ENCODE measurements at regions of chr1 and their contacts with region 1.

Region 1: DNA sequence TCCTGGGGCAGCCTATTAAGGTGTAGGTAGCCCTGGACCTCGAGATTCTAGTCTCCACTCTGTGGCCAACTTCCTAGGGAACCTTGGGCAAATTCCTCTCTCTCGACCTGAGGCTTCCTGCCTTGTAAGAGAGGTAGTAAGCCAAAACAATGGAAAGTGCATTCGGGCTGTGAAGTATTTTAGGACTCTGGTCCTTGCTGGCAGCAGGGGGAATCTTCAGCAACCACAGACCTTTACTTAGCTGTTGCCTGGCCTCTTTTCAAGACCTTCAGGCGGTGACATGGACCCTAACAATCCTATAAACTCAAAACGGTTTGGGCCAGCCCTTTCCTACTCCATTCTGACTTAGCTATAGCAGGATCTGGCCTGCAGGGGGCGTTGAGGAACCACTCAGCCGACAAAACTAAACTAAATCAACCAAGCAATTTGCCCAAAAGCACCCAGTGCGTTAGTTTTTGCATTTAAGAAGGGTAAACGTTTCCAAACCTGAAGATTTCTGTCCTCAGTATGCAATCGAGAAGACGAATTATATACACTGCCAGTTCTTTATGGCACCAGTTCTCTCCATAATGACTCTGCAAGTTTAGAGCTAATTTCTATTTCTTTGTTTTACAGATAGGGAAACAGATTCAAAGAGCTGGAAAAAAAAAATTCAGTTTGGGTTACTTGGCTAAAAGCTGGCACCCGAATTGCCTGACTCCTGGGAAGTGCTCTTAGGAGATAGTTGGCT is 10.9 kb upstream of the SESN2 start:
- H3K4me3 ChIP-seq: peak overlapping the region; percentile 13
- H3K27ac ChIP-seq: peak overlapping the region; percentile 44
- H3K4me1 ChIP-seq: peaks cover 12% of the 10 kb centered on the region; the same call in 1 of the 2 replicates
- CTCF ChIP-seq: peak; percentile 63

Region 2: GRCh38 chr1:28235755-28236655 is 12.4 kb before region 1 on chr1 and contains the start of gene ATP5IF1:
- CTCF ChIA-PET with region 1: interaction called, 16 read pairs
- POLR2A ChIA-PET with region 1: interaction called, 23 read pairs
- H3K4me3 ChIP-seq: peak within 1 kb of the TSS; percentile 77
- H3K27ac ChIP-seq: peak within 1 kb of the TSS; percentile 48; the same call in 1 of the 2 replicates
- H3K4me1 ChIP-seq: 0 out of 2 replicates have a peak, but pooled peaks cover 3% of the 10 kb centered on the region
- CTCF ChIP-seq: 0 out of 2 replicates have a peak, but pooled peaks have one; percentile 10

Region 3: GRCh38 chr1:28266920-28267322 is 18.5 kb after region 1 on chr1:
- CTCF ChIA-PET with region 1: interaction called, 14 read pairs
- POLR2A ChIA-PET with region 1: interaction called, 13 read pairs
- H3K4me3 ChIP-seq: no peak overlapping the region
- H3K27ac ChIP-seq: no peak overlapping the region
- H3K4me1 ChIP-seq: peaks cover 11% of the 10 kb centered on the region
- CTCF ChIP-seq: no peak

Region 4: DNA sequence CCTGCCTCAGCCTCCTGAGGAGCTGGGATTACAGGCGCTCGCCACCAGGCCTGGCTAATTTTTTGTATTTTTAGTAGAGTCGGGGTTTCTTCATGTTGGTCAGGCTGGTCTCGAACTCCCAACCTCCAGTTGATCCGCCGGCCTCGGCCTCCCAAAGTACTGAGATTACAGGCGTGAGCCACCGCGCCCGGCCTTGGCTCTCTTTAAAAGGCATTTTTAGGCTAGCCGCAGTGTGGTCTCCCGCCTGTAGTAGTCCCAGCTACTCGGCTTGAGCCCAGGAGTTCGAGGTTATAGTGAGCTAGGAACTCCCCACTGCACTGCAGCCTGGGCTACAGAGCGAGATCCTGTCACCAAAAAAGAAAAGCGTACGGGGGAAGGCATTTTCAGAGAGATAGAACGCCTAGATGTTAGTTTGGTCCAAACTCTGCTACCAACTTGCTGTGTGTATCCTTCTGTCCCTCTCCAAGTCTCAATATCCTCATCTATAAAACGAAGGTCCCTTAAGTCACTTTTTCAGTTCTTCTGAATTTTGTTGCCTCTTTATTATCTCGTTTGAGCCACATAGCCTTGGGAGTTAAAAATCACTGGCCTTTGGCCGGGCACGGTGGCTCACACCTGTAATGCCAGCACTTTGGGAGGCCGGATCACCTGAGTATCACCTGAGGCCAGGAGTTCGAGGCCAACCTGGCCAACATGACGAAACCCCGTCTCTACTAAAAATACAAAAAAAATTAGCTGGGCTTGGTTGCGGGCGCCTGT is 81.1 kb after region 1 on chr1:
- CTCF ChIA-PET with region 1: interaction called, 24 read pairs
- POLR2A ChIA-PET with region 1: interaction called, 16 read pairs
- H3K4me3 ChIP-seq: peak overlapping the region; percentile 65
- H3K27ac ChIP-seq: peak overlapping the region; percentile 72
- H3K4me1 ChIP-seq: no peaks in the 10 kb centered on the region
- CTCF ChIP-seq: no peak

Region 5: DNA sequence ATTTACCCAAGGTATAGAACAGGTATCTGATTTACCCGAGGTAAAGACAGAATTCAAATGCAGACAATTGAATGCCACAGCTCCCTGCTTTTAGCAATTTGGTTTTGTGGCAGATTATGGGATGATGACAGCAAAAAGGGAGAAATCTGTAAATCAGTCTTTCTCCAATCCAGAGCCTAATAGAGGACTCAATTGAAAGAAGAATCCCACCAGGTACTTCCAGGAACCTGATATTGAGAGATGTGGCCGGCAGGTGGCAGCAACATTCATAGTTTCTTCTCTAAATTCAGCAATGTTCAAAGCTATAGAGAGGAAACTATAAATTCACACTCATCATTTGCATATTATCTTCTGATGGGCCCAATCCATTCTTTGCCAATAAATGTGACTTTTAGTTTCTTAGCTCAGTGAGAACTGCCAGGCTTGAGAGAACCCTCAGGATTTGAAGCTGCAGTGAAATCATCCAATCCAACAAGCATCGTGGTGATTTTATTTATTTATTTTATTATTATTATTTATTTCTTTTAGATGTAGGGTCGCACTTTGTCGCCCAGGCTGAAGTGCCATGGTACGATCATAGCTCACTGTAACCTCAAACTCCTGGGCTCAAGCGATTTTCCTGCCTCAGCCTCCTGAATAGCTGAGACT is 111.3 kb after region 1 on chr1:
- CTCF ChIA-PET with region 1: interaction called, 22 read pairs
- POLR2A ChIA-PET with region 1: interaction called, 3 read pairs
- H3K4me3 ChIP-seq: no peak overlapping the region
- H3K27ac ChIP-seq: no peak overlapping the region
- H3K4me1 ChIP-seq: no peaks in the 10 kb centered on the region
- CTCF ChIP-seq: 0 out of 2 replicates have a peak, but pooled peaks have one; percentile 20

Measured in HEK293 (cell line).